Activated naive CD4-positive, alpha-beta T cell treated with anti-CD3 and anti-CD28 coated beads for 36 hours (primary cell): ENCODE measurements at regions of chr3 and their contacts with region 1.

Region 1: DNA sequence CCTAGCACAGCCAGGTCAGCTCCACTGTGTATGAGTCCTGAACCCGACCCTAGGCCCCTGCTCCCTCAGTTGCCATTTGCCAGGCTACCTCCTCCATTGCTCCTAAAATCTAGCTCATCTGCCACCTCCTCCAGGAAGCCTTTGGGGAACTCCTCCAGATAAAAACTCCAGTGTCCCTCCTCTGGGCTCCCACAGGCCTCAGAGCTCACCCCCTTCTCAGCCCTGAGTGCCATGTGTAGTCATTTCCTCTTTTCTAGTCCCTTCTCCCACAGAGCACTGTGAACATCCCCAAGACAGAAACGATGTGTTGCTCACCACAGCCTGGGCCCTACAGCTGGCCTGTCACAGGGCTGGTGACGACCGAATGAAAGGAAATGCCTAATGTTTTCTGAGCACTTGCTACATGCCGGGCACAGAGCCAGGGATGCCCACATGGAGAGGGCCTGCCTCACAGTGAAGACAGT is 61.0 kb downstream of the IQSEC1 start:
- DNase-seq: peak; percentile 88
- H3K4me3 Mint-ChIP-seq: peak overlapping the region; percentile 65
- H3K27ac Mint-ChIP-seq: peak overlapping the region; percentile 97
- H3K4me1 Mint-ChIP-seq: peaks cover 80% of the 10 kb centered on the region
- H3K27me3 Mint-ChIP-seq: no peaks in the 10 kb centered on the region

Region 2: GRCh38 chr3:12868039-12869034 is 143.9 kb before region 1 on chr3:
- CTCF ChIA-PET with region 1: no interaction called
- intact Hi-C with region 1: no loop called
- DNase-seq: peak; percentile 71
- H3K4me3 Mint-ChIP-seq: peak overlapping the region; percentile 67
- H3K27ac Mint-ChIP-seq: no peak overlapping the region
- H3K4me1 Mint-ChIP-seq: peaks cover 7% of the 10 kb centered on the region
- H3K27me3 Mint-ChIP-seq: peaks cover 16% of the 10 kb centered on the region

Region 3: GRCh38 chr3:12891985-12892839 is 120.0 kb before region 1 on chr3:
- CTCF ChIA-PET with region 1: no interaction called
- intact Hi-C with region 1: no loop called
- DNase-seq: peak; percentile 63
- H3K4me3 Mint-ChIP-seq: no peak overlapping the region
- H3K27ac Mint-ChIP-seq: no peak overlapping the region
- H3K4me1 Mint-ChIP-seq: peaks cover 5% of the 10 kb centered on the region
- H3K27me3 Mint-ChIP-seq: no peaks in the 10 kb centered on the region

Region 4: GRCh38 chr3:12947308-12948069 is 64.8 kb before region 1 on chr3:
- CTCF ChIA-PET with region 1: no interaction called
- intact Hi-C with region 1: no loop called
- DNase-seq: no peak
- H3K4me3 Mint-ChIP-seq: no peak overlapping the region
- H3K27ac Mint-ChIP-seq: no peak overlapping the region
- H3K4me1 Mint-ChIP-seq: peaks cover 46% of the 10 kb centered on the region
- H3K27me3 Mint-ChIP-seq: no peaks in the 10 kb centered on the region

Region 5: GRCh38 chr3:12967606-12968351 is 44.5 kb before region 1 on chr3:
- CTCF ChIA-PET with region 1: interaction called, 4 read pairs
- intact Hi-C with region 1: loop called (anchors 1 kb)
- DNase-seq: peak; percentile 89
- H3K4me3 Mint-ChIP-seq: peak overlapping the region; percentile 59
- H3K27ac Mint-ChIP-seq: no peak overlapping the region
- H3K4me1 Mint-ChIP-seq: peaks cover 51% of the 10 kb centered on the region
- H3K27me3 Mint-ChIP-seq: no peaks in the 10 kb centered on the region

Region 6: DNA sequence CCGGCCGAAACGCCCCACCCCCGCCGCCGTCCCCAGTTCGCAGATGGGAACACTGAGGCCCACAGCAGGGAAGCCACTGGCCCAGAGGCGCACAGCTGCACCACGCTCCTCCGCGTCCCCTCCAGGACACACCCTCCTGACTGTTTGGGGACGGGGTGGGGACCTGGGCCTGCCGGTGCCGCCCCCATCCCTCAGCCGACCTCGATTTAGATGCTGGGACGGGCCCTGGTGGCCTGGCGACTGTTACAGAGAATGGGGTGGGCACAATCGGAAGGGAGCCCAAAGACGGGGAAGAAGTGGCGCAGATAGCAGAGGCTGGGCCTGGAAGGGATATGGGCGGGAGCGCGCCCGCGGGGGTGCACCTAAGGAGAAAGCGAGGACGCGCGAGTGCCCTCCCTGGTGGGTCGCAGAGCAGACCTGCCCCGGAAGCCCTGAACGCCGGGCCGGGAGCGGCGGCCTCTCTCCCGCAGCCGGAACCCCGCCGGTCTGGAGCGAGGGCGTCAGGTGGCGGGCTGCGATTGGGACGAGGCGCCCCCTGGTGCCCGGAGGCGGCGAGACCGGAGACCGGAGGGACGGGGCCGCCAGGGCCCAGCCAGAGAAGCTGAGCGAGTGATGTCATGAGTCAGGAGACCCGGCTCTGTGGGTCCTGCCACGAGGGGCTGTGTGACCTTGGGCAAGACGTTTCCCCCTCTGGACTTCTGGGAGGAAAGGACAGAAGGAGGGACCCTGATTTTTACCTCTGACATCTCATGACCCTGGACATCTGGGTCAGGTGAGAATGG is 17.5 kb before region 1 on chr3:
- CTCF ChIA-PET with region 1: interaction called, 34 read pairs
- intact Hi-C with region 1: loop called (anchors 1 kb)
- DNase-seq: peak; percentile 90
- H3K4me3 Mint-ChIP-seq: peak overlapping the region; percentile 86
- H3K27ac Mint-ChIP-seq: peak overlapping the region; percentile 87
- H3K4me1 Mint-ChIP-seq: peaks cover 71% of the 10 kb centered on the region
- H3K27me3 Mint-ChIP-seq: no peaks in the 10 kb centered on the region

Region 7: DNA sequence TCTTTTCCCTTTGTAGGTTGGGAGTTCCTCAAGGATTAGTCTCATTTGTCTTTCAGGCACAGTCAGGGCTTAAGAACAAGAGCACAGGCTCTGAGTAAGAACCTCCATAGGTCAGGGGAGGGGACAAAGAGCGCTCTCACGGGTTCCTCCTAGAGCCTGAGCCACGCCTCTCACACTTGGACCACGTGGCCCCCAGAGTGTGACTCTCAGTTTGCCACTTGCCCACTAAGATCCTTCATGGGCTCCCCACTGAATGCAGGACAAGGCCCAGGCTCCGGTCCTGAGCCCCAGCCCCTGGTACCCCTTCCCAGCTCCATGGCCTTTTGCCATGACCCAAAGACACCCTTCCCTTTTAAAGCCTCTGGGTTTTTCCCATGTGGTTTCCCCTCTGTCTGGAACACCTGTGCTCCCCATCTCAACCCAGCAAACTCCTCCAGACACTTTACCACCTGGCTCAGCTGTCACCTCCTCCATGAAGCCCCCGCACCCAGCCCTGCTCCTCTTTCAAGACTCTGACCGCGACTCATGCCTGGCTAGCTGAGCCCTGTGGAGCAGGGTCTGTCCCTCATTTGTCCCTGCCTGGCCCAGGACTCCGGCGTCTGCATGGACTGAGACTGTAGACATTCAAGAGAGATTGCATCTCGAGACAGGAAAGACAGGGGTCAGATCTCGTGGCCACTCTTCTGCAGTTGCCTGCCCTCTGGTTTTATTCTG is 28.3 kb after region 1 on chr3:
- CTCF ChIA-PET with region 1: no interaction called
- intact Hi-C with region 1: loop called (anchors 1 kb)
- DNase-seq: peak; percentile 75
- H3K4me3 Mint-ChIP-seq: no peak overlapping the region
- H3K27ac Mint-ChIP-seq: no peak overlapping the region
- H3K4me1 Mint-ChIP-seq: peaks cover 10% of the 10 kb centered on the region
- H3K27me3 Mint-ChIP-seq: no peaks in the 10 kb centered on the region

Region 8: GRCh38 chr3:13069495-13069894 is 57.2 kb after region 1 on chr3:
- CTCF ChIA-PET with region 1: interaction called, 3 read pairs
- intact Hi-C with region 1: loop called (anchors 1 kb)
- DNase-seq: peak; percentile 87
- H3K4me3 Mint-ChIP-seq: peak overlapping the region; percentile 49
- H3K27ac Mint-ChIP-seq: peak overlapping the region; percentile 88
- H3K4me1 Mint-ChIP-seq: peaks cover 26% of the 10 kb centered on the region
- H3K27me3 Mint-ChIP-seq: peaks cover 14% of the 10 kb centered on the region

Region 9: GRCh38 chr3:13192471-13193213 is 180.4 kb after region 1 on chr3:
- CTCF ChIA-PET with region 1: no interaction called
- intact Hi-C with region 1: no loop called
- DNase-seq: no peak
- H3K4me3 Mint-ChIP-seq: no peak overlapping the region
- H3K27ac Mint-ChIP-seq: no peak overlapping the region
- H3K4me1 Mint-ChIP-seq: peaks cover 13% of the 10 kb centered on the region
- H3K27me3 Mint-ChIP-seq: peaks cover 3% of the 10 kb centered on the region

Region 10: DNA sequence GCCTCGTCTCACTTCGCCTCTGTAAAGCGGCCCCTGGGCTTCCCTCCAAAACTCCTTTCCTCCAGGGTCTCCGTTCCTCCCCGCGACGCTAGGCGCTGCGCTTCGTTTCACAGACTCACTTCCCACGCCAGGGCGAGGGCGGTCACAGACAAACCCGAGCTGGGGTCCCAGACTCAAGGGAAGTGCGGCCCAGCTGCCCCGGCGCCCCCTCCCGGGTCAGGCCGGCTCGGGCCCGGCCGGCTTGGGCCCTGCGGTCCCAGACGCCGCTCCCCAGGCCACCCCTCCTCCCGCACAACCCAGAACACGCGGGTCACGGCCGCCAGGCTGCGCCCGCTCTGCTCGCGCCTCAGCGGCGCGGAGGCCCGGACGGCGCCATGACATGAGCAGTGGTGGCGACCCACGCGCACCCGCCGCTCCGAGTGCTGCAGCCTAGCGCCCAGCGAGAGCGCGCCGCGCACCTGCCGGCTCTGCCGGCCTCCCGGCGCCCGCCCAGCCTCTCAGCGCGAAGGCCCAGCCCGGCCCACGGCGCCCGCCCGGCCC is 407.3 kb after region 1 on chr3:
- CTCF ChIA-PET with region 1: no interaction called
- intact Hi-C with region 1: loop called (anchors 2 kb)
- DNase-seq: peak; percentile 52
- H3K4me3 Mint-ChIP-seq: peak overlapping the region; percentile 92
- H3K27ac Mint-ChIP-seq: peak overlapping the region; percentile 93
- H3K4me1 Mint-ChIP-seq: peaks cover 70% of the 10 kb centered on the region
- H3K27me3 Mint-ChIP-seq: no peaks in the 10 kb centered on the region

Region 11: GRCh38 chr3:14431892-14432834 is 1419.9 kb after region 1 on chr3:
- CTCF ChIA-PET with region 1: no interaction called
- intact Hi-C with region 1: loop called (anchors 5 kb)
- DNase-seq: peak; percentile 98
- H3K4me3 Mint-ChIP-seq: peak overlapping the region; percentile 66
- H3K27ac Mint-ChIP-seq: peak overlapping the region; percentile 94
- H3K4me1 Mint-ChIP-seq: peaks cover 76% of the 10 kb centered on the region
- H3K27me3 Mint-ChIP-seq: no peaks in the 10 kb centered on the region